Activated CD8-positive, alpha-beta memory T cell treated with anti-CD3 and anti-CD28 coated beads, Interleukin-2, amount 10 ng/mL, durations not matched to agents 7 days and 5 days (primary cell): ENCODE measurements at regions of chr11 and their contacts with region 1.

Region 1: DNA sequence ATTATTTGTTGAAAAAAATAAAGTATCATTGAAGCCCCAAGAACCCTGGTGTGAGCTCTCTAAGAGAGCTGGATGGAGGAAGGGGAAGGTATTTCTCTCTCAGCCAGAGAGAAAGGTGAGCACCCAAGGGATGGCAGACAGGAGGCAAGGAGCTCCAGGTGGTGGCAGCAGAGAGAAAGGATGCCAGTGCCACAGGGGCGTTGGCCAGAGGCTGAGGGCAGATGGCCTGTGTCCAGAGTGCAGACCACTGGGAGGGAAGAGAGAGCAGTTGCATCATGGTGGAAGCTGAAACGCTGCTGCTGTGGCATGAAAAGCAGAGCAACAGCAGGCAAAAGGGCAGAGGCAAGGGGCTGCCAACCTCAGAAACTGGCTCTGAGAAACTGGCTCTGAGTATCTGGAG is 8.5 kb downstream of the SPON1 start:
- DNase-seq: no peak
- ATAC-seq: peak; percentile 27
- H3K4me3 Mint-ChIP-seq: no peak overlapping the region
- H3K27ac Mint-ChIP-seq: no peak overlapping the region
- H3K4me1 Mint-ChIP-seq: peaks cover 44% of the 10 kb centered on the region
- H3K27me3 Mint-ChIP-seq: peaks cover 25% of the 10 kb centered on the region

Region 2: GRCh38 chr11:14148653-14149273 is 177.8 kb after region 1 on chr11:
- CTCF ChIA-PET with region 1: interaction called, 10 read pairs
- DNase-seq: no peak
- ATAC-seq: peak; percentile 67
- H3K4me3 Mint-ChIP-seq: no peak overlapping the region
- H3K27ac Mint-ChIP-seq: no peak overlapping the region
- H3K4me1 Mint-ChIP-seq: peaks cover 6% of the 10 kb centered on the region
- H3K27me3 Mint-ChIP-seq: peaks cover 6% of the 10 kb centered on the region